Common myeloid progenitor, CD34-positive (primary cell): ENCODE measurements at regions of chr4 and their contacts with region 1.

Region 1: DNA sequence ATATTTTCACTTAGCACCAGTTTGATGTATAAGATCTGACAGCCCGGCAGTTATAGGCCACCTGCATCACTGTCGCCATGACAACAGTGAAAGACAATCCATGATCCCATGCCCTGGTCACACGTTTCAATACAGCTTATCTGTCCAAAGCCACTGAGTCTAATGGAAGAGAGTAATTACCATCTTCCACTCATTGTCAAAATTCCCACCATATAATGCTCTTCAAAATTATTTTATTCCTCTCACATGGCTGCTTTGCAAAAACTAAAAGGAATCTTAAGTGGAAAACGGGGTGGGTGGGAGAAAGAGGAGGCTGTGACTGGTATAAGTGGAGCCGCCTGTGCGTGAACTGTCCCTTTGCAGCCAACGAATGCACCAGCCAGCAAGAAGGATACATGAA is 44.2 kb downstream of the MAML3 start:
- DNase-seq: no peak
- H3K4me3 ChIP-seq: no peak overlapping the region
- H3K27ac ChIP-seq: no peak overlapping the region
- H3K4me1 ChIP-seq: peaks cover 3 to 43% (median 22%) of the 10 kb centered on the region in 4 experiments
- H3K27me3 ChIP-seq: no peaks in the 10 kb centered on the region

Region 2: DNA sequence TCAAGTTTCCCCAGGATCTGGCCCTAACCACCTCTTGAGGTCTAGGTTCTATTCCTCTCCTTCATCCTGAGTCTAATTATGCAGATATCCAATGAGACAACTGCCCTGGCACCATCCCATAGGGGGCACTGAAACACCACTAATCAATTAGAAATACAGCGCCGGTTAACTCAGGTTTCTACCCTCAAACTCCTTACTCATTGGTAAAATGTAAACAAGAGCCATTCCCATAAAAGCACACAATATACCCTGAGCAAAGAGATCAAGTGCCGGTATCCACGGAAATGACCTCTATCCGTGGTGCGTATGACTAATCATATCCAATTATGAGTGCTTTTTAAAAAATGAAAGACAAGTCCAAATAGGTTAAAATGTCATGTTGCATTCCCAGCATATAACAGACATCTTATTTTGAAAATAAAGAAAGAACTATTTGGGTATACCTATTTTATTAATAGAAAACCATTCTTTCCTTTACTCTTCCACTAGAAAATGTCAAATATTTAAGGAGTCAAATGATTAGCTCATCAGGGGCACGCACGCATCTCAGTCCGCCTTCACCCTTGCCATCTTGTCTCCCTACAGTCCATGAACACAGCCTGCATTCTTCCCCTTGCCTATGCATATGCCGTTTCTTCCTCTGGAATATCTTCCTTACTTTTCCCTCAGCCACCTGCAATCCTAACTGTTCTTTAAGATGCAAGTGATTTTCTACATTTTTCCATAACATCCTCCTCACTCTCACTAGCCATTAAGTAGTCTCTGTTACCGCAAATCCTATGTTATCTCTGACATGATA is 96.8 kb before region 1 on chr4:
- CTCF ChIA-PET with region 1: no interaction called
- POLR2A ChIA-PET with region 1: no interaction called
- DNase-seq: peak; percentile 82 to 86 (median 84)
- H3K4me3 ChIP-seq: peak overlapping the region in 4 of 7 experiments; percentile 12 to 64 (median 37)
- H3K27ac ChIP-seq: peak overlapping the region in 1 of 2 experiments; percentile 20
- H3K4me1 ChIP-seq: peaks cover 0 to 13% (median 8%) of the 10 kb centered on the region in 4 experiments
- H3K27me3 ChIP-seq: no peaks in the 10 kb centered on the region

Region 3: GRCh38 chr4:140123666-140124377 is 14.1 kb after region 1 on chr4:
- CTCF ChIA-PET with region 1: interaction called, 11 read pairs
- POLR2A ChIA-PET with region 1: interaction called, 4 read pairs
- DNase-seq: no peak
- H3K4me3 ChIP-seq: no peak overlapping the region
- H3K27ac ChIP-seq: no peak overlapping the region
- H3K4me1 ChIP-seq: peaks cover 0 to 13% (median 1%) of the 10 kb centered on the region in 4 experiments
- H3K27me3 ChIP-seq: no peaks in the 10 kb centered on the region

Region 4: DNA sequence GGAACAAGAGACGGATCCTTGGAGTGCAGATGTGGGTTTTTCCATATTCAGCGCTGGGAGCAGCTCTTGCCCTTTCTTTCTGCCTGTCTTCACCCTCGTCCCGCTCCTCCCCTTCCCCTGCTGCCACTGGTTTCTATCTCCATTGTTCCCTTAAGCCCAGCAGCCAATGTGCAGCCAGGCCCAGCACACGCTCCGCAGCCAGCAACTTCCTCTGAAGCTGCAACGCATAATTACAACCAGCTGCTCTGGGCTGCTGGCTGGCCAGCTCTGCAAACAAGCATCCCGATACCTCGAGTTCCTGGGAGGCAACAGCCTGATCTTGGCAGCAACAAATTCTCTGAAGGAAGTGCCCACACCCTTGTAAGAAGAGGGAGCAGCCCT is 127.9 kb after region 1 on chr4:
- CTCF ChIA-PET with region 1: no interaction called
- POLR2A ChIA-PET with region 1: no interaction called
- DNase-seq: peak; percentile 40 to 77 (median 68)
- H3K4me3 ChIP-seq: peak overlapping the region in 3 of 7 experiments; percentile 19 to 22 (median 21)
- H3K27ac ChIP-seq: no peak overlapping the region
- H3K4me1 ChIP-seq: peaks cover 25 to 65% (median 49%) of the 10 kb centered on the region in 4 experiments
- H3K27me3 ChIP-seq: no peaks in the 10 kb centered on the region

Region 5: GRCh38 chr4:140252742-140253555 is 143.2 kb after region 1 on chr4:
- CTCF ChIA-PET with region 1: no interaction called
- POLR2A ChIA-PET with region 1: no interaction called
- DNase-seq: peak; percentile 63 to 77 (median 76)
- H3K4me3 ChIP-seq: peak overlapping the region; percentile 41 to 80 (median 68)
- H3K27ac ChIP-seq: peak overlapping the region; percentile 27 to 74
- H3K4me1 ChIP-seq: peaks cover 8 to 35% (median 22%) of the 10 kb centered on the region in 4 experiments
- H3K27me3 ChIP-seq: no peaks in the 10 kb centered on the region